ENCODE measurements at regions of chr5 and their contacts with region 1.

Region 1: GRCh38 chr5:180291943-180292831 is at the start of gene MAPK9:
- DNase-seq: peak; percentile 76 to 96 (median 83)
- ATAC-seq: peak; percentile 69
- H3K4me3 ChIP-seq: peak within 1 kb of the TSS; percentile 62 to 87
- H3K4me3 Mint-ChIP-seq: peak within 1 kb of the TSS; percentile 95
- H3K27ac ChIP-seq: peak within 1 kb of the TSS; percentile 88 to 93
- H3K27ac Mint-ChIP-seq: peak within 1 kb of the TSS; percentile 99
- H3K4me1 ChIP-seq: peaks cover 23% of the 10 kb centered on the region
- H3K4me1 Mint-ChIP-seq: peaks cover 56% of the 10 kb centered on the region
- H3K27me3 ChIP-seq: no peaks in the 10 kb centered on the region
- H3K27me3 Mint-ChIP-seq: no peaks in the 10 kb centered on the region
- CTCF ChIP-seq: no peak
- total RNA-seq, gene MAPK9: 23.3 to 24.9 TPM

Region 2: GRCh38 chr5:179275941-179276837 is 1016.0 kb before region 1 on chr5:
- CTCF ChIA-PET with region 1: no interaction called
- POLR2A ChIA-PET with region 1: no interaction called
- intact Hi-C with region 1: no loop called
- DNase-seq: no peak
- ATAC-seq: no peak
- H3K4me3 ChIP-seq: no peak overlapping the region
- H3K4me3 Mint-ChIP-seq: no peak overlapping the region
- H3K27ac ChIP-seq: no peak overlapping the region
- H3K27ac Mint-ChIP-seq: no peak overlapping the region
- H3K4me1 ChIP-seq: no peaks in the 10 kb centered on the region
- H3K4me1 Mint-ChIP-seq: no peaks in the 10 kb centered on the region
- H3K27me3 ChIP-seq: no peaks in the 10 kb centered on the region
- H3K27me3 Mint-ChIP-seq: no peaks in the 10 kb centered on the region
- CTCF ChIP-seq: no peak

Region 3: DNA sequence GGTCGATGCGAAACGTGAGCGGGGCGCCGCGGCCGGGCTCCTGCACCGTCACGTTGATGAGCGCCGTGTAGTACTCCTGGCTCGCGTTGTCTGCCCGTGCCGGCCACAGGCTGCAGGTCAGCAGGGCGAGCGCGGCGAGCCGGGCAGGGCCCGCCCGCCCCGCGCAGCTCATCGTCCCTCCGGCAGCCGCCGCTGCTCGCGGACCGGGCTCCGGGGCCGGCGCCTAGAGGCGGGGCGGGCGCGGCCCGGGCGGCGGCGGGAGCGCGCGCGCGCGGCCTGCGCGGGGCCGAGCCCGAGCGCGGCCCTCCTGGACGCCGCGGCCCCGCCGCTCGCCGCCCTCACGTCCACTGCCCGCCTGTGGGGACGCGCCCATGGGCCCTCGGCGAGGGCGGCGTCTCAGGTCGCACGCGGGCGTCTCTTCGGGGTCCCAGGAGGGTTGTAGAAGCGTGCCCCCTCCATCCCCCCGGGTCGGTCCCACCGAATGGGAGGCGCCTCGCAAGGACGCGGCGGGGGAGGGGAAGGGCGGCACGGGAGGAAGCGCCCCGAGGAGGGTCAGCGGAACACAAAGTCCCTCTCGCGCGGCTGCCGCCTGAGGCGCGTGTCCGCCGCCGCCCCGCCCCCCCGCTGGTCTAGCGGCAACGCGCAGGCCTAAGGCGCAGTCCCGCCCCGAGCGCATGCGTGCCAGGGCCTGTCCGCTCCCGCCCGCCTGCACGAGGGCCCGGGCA is 220.5 kb before region 1 on chr5 and contains the start of gene RNF130:
- CTCF ChIA-PET with region 1: no interaction called
- POLR2A ChIA-PET with region 1: no interaction called
- intact Hi-C with region 1: loop called (anchors 5 kb)
- DNase-seq: peak; percentile 58 to 92 (median 83)
- ATAC-seq: peak; percentile 73
- H3K4me3 ChIP-seq: peak within 1 kb of the TSS; percentile 63 to 73
- H3K4me3 Mint-ChIP-seq: peak within 1 kb of the TSS; percentile 86
- H3K27ac ChIP-seq: peak within 1 kb of the TSS; percentile 54 to 71
- H3K27ac Mint-ChIP-seq: peak within 1 kb of the TSS; percentile 80
- H3K4me1 ChIP-seq: peaks cover 26% of the 10 kb centered on the region
- H3K4me1 Mint-ChIP-seq: peaks cover 32% of the 10 kb centered on the region
- H3K27me3 ChIP-seq: no peaks in the 10 kb centered on the region
- H3K27me3 Mint-ChIP-seq: no peaks in the 10 kb centered on the region
- CTCF ChIP-seq: no peak
- total RNA-seq, gene RNF130: 13.9 to 15.8 TPM

Region 4: GRCh38 chr5:180315762-180316212 is 23.6 kb after region 1 on chr5:
- CTCF ChIA-PET with region 1: interaction called, 104 read pairs
- POLR2A ChIA-PET with region 1: interaction called, 19 read pairs
- intact Hi-C with region 1: loop called (anchors 1 kb)
- DNase-seq: peak; percentile 51 to 85 (median 76)
- ATAC-seq: peak; percentile 97
- H3K4me3 ChIP-seq: no peak overlapping the region
- H3K4me3 Mint-ChIP-seq: no peak overlapping the region
- H3K27ac ChIP-seq: no peak overlapping the region
- H3K27ac Mint-ChIP-seq: no peak overlapping the region
- H3K4me1 ChIP-seq: no peaks in the 10 kb centered on the region
- H3K4me1 Mint-ChIP-seq: no peaks in the 10 kb centered on the region
- H3K27me3 ChIP-seq: no peaks in the 10 kb centered on the region
- H3K27me3 Mint-ChIP-seq: peaks cover 4% of the 10 kb centered on the region
- CTCF ChIP-seq: peak; percentile 98

Region 5: GRCh38 chr5:180353048-180353979 is 61.1 kb after region 1 on chr5 and contains the start of gene GFPT2:
- CTCF ChIA-PET with region 1: interaction called, 3 read pairs
- POLR2A ChIA-PET with region 1: no interaction called
- intact Hi-C with region 1: loop called (anchors 2 kb)
- DNase-seq: peak; percentile 55 to 89 (median 71)
- ATAC-seq: peak; percentile 88
- H3K4me3 ChIP-seq: peak within 1 kb of the TSS; percentile 70 to 76
- H3K4me3 Mint-ChIP-seq: peak within 1 kb of the TSS; percentile 74
- H3K27ac ChIP-seq: peak within 1 kb of the TSS in 1 of 2 experiments; percentile 12
- H3K27ac Mint-ChIP-seq: no peak within 1 kb of the TSS
- H3K4me1 ChIP-seq: peaks cover 11% of the 10 kb centered on the region
- H3K4me1 Mint-ChIP-seq: peaks cover 6% of the 10 kb centered on the region
- H3K27me3 ChIP-seq: peaks cover 19 to 27% of the 10 kb centered on the region in 2 experiments
- H3K27me3 Mint-ChIP-seq: peaks cover 40% of the 10 kb centered on the region
- CTCF ChIP-seq: no peak
- total RNA-seq, gene GFPT2: 7.9 to 9.9 TPM

Region 6: GRCh38 chr5:180494060-180494509 is 201.9 kb after region 1 on chr5 and contains the start of gene CNOT6:
- CTCF ChIA-PET with region 1: no interaction called
- POLR2A ChIA-PET with region 1: no interaction called
- intact Hi-C with region 1: loop called in 1 of 2 experiments (anchors 1 kb)
- DNase-seq: peak; percentile 90 to 98 (median 95)
- ATAC-seq: peak; percentile 91
- H3K4me3 ChIP-seq: peak within 1 kb of the TSS; percentile 64
- H3K4me3 Mint-ChIP-seq: peak within 1 kb of the TSS; percentile 98
- H3K27ac ChIP-seq: peak within 1 kb of the TSS; percentile 80 to 88
- H3K27ac Mint-ChIP-seq: peak within 1 kb of the TSS; percentile 99
- H3K4me1 ChIP-seq: peaks cover 16% of the 10 kb centered on the region
- H3K4me1 Mint-ChIP-seq: peaks cover 40% of the 10 kb centered on the region
- H3K27me3 ChIP-seq: no peaks in the 10 kb centered on the region
- H3K27me3 Mint-ChIP-seq: no peaks in the 10 kb centered on the region
- CTCF ChIP-seq: no peak
- total RNA-seq, gene CNOT6: 13.1 to 13.9 TPM

Measured in CD8-positive, alpha-beta T cell (primary cell).